ENCODE measurements at regions of chr12 and their contacts with region 1.

Region 1: GRCh38 chr12:128864516-128865186 is 11.4 kb downstream of the GLT1D1 start:
- DNase-seq: no peak
- ATAC-seq: peak; percentile 93

Region 2: DNA sequence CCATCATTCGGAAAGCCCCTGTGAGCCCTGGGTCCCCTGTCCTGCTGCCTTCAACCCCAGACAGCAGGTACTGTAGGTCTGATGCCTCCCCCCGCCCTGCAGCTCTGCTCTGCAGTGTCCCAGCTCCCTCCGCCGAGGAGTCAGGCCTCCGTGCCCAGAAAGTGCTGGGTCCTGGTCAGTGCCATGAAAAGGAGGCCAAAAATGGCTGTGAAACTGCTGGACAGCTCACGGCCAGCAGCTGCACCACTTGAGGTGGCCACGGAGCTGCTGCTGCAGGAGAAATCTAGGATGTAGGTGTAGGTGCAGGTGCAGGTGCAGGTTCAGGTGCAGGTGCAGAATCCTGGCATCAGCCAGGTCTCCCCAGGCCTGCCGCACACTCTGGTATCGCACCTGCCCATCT is 237.0 kb before region 1 on chr12:
- intact Hi-C with region 1: no loop called
- DNase-seq: no peak
- ATAC-seq: no peak

Region 3: GRCh38 chr12:128823916-128824839 is 40.5 kb before region 1 on chr12 and contains the start of gene SLC15A4:
- intact Hi-C with region 1: loop called (anchors 2 kb)
- DNase-seq: peak; percentile 99
- ATAC-seq: peak; percentile 98
- total RNA-seq, gene SLC15A4: 16.3 TPM

Region 4: DNA sequence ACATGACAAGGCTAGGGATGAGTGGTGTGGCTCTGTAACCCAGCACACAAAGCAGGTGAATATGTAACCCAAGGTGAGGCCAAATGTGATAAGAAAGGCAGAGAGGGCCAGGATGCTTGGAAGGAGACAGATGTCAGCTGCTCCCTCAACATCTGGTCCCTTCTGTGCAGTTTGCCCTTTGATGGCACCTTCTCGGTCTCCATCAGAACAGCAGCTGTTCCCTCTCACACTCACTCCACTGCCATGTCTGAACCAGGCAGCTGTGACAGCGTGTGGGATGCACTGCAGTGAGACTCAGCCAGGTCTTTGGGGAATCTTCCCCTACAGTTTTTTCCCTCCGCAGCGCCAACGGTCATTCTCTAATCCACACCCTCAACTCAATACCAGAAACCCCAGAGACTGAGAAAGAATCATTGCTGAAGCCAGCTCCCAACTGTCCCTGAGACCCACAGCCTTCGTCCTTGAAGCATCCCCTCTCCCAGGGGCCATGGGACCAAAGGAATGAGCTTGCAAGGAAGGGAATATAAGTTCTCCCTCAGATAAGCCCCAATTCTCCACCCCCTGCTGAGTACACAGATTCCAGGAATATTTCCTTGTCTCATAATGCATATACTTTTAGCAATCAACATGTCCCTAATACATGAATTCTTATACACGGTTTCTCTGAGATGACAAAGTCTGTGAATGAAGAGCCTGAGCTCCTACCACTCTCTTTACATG is 218.6 kb after region 1 on chr12:
- intact Hi-C with region 1: no loop called
- DNase-seq: no peak
- ATAC-seq: no peak